Ascending aorta (tissue), 2 donors: ENCODE measurements at regions of chr2 and their contacts with region 1.

Region 1: GRCh38 chr2:69643602-69644505 is at the start of gene AAK1:
- DNase-seq: peak; percentile 50 to 95
- H3K4me3 ChIP-seq: peak within 1 kb of the TSS; percentile 89 to 97
- H3K27ac ChIP-seq: peak within 1 kb of the TSS; percentile 95
- H3K4me1 ChIP-seq: peaks cover 9 to 26% of the 10 kb centered on the region in 2 donors
- H3K27me3 ChIP-seq: no peaks in the 10 kb centered on the region
- CTCF ChIP-seq: peak in 1 of 3 experiments; percentile 25
- total RNA-seq, gene AAK1: 53.4 TPM

Region 2: DNA sequence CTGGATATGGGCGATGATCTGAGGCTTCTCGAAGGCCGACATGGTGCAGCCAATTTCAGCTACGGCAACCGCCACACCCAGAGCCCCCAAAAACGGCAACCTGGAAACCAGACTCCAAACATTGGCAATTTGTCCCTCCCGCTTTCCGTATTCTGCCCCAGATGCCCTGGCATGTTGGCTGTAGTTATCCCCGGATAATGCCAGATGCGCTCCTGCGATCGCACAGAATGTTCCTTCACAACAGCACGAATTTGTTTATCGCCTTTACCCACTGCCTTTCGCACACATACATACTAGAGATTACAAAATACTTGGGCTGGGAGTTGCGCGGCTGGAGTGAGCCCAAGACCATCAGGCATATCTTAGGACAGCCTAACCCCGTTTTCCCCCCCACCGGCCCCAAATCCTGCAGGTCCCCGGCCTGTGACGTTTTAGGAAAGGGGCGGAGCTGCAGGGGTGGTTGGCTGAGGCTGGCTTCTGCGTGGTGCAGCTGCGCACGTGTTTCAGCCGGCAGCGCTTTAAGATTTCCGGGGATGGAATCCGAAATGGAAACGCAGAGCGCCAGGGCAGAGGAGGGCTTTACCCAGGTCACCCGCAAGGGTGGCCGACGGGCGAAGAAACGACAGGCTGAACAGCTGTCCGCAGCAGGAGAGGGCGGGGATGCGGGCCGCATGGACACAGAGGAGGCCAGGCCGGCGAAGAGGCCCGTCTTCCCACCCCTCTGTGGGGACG is 1486.3 kb before region 1 on chr2 and contains the start of gene PNO1:
- intact Hi-C with region 1: loop called (anchors 5 kb)
- DNase-seq: peak; percentile 78 to 97
- H3K4me3 ChIP-seq: peak within 1 kb of the TSS; percentile 72 to 91
- H3K27ac ChIP-seq: peak within 1 kb of the TSS; percentile 82 to 83
- H3K4me1 ChIP-seq: peaks cover 4 to 17% of the 10 kb centered on the region in 2 donors
- H3K27me3 ChIP-seq: no peaks in the 10 kb centered on the region
- CTCF ChIP-seq: no peak
- total RNA-seq, gene PNO1: 5.4 TPM

Region 3: DNA sequence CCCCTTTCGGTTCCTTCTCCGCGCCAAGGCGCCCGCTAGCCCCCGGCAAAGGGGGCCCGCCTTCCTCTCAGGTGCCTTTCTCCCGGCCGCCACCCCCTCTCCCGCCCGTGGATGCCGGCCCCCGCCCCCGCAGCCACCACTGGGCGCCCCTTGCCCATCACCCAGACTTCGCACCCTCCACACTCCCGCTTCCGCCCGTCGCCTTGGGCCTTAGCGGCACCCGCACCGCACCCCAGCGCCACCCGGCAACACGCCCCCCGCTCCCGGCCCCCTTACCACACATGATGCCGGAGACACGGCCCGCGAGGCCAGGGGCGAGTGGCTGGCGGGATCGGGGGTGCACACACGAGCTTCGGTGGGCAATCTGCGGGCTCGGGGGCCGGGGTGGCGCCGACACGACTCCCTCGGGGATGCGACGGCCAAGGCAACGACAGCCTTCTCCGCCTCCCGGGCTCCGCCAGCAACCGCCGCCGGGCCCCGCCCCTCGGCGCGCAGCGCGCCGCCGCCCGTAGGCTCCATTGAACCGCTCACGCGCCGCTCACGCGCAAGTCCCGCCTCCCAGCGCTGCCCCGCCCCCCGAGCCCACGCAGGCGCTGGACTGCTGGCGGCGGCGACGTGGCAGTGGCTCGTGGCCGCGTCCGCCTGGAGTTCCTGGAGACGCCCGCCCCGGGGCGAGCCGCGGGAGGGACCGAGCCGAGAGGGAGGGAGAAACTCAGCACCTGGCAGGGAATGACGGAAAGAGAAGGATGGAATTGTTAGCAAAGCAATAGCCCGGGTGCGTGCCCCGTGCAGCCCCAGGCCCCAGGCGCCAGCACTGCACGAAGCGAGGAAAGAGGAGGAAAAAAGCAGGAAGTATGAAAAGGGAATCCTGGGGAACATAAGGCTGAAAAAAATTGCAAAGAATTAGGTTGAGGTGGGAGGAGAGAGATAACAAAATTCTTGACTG is 256.8 kb before region 1 on chr2 and contains the start of gene GFPT1:
- intact Hi-C with region 1: loop called (anchors 5 kb)
- DNase-seq: peak; percentile 79 to 97
- H3K4me3 ChIP-seq: peak within 1 kb of the TSS; percentile 82 to 87
- H3K27ac ChIP-seq: peak within 1 kb of the TSS; percentile 89 to 90
- H3K4me1 ChIP-seq: peaks cover 3 to 4% of the 10 kb centered on the region in 2 donors
- H3K27me3 ChIP-seq: no peaks in the 10 kb centered on the region
- CTCF ChIP-seq: no peak
- total RNA-seq, gene GFPT1: 25.7 TPM

Region 4: GRCh38 chr2:69436938-69437750 is 206.7 kb before region 1 on chr2 and contains the start of gene NFU1:
- intact Hi-C with region 1: loop called (anchors 2 kb)
- DNase-seq: peak; percentile 80 to 97
- H3K4me3 ChIP-seq: peak within 1 kb of the TSS; percentile 81 to 92
- H3K27ac ChIP-seq: peak within 1 kb of the TSS; percentile 94 to 95
- H3K4me1 ChIP-seq: peaks cover 5 to 14% of the 10 kb centered on the region in 2 donors
- H3K27me3 ChIP-seq: no peaks in the 10 kb centered on the region
- CTCF ChIP-seq: peak; percentile 61 to 84 (median 75)
- total RNA-seq, gene NFU1: 49.4 TPM

Region 5: DNA sequence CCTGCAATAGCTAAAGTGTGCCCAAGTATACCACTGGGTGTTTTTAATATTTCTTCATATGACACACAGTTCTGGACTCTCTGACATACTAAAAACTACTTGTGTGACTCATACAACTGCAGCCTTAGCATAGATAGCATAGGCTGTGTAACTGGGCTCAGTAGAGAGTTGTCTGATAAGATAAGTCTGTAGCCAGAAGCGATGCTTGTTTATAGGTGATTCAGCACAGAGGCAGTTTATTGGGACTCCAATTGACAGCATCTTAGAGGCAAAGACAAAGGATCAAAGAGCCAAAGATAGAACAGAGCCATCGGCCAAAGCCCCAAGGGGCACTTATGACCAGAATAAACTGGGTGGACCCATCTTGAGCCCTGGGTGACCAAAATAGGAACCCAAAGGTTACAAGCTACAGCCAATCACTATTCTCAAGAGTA is 42.7 kb before region 1 on chr2:
- intact Hi-C with region 1: loop called (anchors 5 kb)
- DNase-seq: no peak
- H3K4me3 ChIP-seq: no peak overlapping the region
- H3K27ac ChIP-seq: peak overlapping the region in 1 of 2 donors; percentile 57
- H3K4me1 ChIP-seq: peaks cover 0 to 17% of the 10 kb centered on the region in 2 donors
- H3K27me3 ChIP-seq: no peaks in the 10 kb centered on the region
- CTCF ChIP-seq: no peak

Region 6: DNA sequence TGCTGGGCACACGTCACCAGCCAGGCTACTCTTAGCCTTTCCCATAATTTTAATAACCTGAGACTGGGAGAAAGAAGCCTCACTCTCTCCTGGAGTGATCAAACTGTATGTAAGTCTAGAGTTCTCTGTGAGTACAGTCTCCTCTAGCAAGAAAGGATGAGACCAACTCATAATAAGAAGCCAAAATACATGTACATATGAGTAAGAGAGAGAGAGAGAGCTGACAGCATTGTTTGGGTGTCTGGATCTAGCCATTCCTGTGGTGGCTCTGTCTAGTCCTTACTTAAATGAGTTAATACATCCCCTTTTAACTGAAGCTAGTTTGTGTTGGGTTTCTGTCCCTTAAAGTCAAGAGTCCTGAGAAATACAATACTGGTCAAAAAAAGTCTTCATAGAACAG is 72.1 kb after region 1 on chr2:
- intact Hi-C with region 1: loop called (anchors 2 kb)
- DNase-seq: no peak
- H3K4me3 ChIP-seq: no peak overlapping the region
- H3K27ac ChIP-seq: no peak overlapping the region
- H3K4me1 ChIP-seq: no peaks in the 10 kb centered on the region
- H3K27me3 ChIP-seq: no peaks in the 10 kb centered on the region
- CTCF ChIP-seq: no peak

Region 7: GRCh38 chr2:69829256-69830046 is 185.6 kb after region 1 on chr2 and contains the start of gene GMCL1:
- intact Hi-C with region 1: loop called (anchors 2 kb)
- DNase-seq: peak; percentile 86 to 98
- H3K4me3 ChIP-seq: peak within 1 kb of the TSS; percentile 90 to 91
- H3K27ac ChIP-seq: peak within 1 kb of the TSS; percentile 91 to 94
- H3K4me1 ChIP-seq: peaks cover 0 to 23% of the 10 kb centered on the region in 2 donors
- H3K27me3 ChIP-seq: no peaks in the 10 kb centered on the region
- CTCF ChIP-seq: peak in 1 of 3 experiments; percentile 10
- total RNA-seq, gene GMCL1: 10.4 TPM